Activated T-helper 1 cell treated with anti-CD3 and anti-CD28 coated beads, Interleukin-12 subunit alpha, Interleukin-12 subunit beta, Interleukin-2, Interleukin-4 antibody, amounts not matched to agents 30 ng/mL and 10 ng/mL and 1 ng/mL, durations not matched to agents 14 hours and 24 hours and 36 hours (primary cell): ENCODE measurements at regions of chr14 and their contacts with region 1.

Region 1: GRCh38 chr14:35533357-35534207 is at the start of gene INSM2:
- DNase-seq: peak; percentile 55
- H3K4me3 Mint-ChIP-seq: peak within 1 kb of the TSS; percentile 73
- H3K27ac Mint-ChIP-seq: no peak within 1 kb of the TSS
- H3K4me1 Mint-ChIP-seq: peaks cover 5% of the 10 kb centered on the region
- H3K27me3 Mint-ChIP-seq: peaks cover 55% of the 10 kb centered on the region
- total RNA-seq, gene INSM2: not detected in 2 replicates

Region 2: GRCh38 chr14:35438910-35439713 is 94.5 kb before region 1 on chr14:
- intact Hi-C with region 1: loop called (anchors 5 kb)
- DNase-seq: no peak
- H3K4me3 Mint-ChIP-seq: no peak overlapping the region
- H3K27ac Mint-ChIP-seq: no peak overlapping the region
- H3K4me1 Mint-ChIP-seq: peaks cover 7% of the 10 kb centered on the region
- H3K27me3 Mint-ChIP-seq: no peaks in the 10 kb centered on the region

Region 3: GRCh38 chr14:35492569-35493014 is 41.0 kb before region 1 on chr14:
- intact Hi-C with region 1: no loop called
- DNase-seq: no peak
- H3K4me3 Mint-ChIP-seq: no peak overlapping the region
- H3K27ac Mint-ChIP-seq: no peak overlapping the region
- H3K4me1 Mint-ChIP-seq: no peaks in the 10 kb centered on the region
- H3K27me3 Mint-ChIP-seq: no peaks in the 10 kb centered on the region

Region 4: DNA sequence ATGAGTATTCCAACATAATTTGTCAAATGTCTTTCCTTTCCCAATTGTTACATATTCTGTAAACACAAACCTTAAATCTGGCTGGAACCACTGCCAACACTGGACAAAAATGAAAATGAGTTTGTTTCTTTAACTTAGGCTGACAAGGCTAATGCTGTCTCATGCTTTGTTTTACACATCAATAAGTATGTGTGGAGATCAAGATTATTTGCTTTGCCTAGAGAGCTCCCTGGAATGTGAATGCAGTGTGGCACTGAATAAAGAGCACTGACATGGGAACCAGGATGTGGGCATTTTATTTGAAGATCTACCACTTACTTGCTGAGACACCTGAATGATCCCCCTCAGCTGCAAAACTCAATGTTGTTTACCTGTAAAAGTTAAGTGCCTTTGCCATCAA is 213.8 kb after region 1 on chr14:
- intact Hi-C with region 1: loop called (anchors 10 kb)
- DNase-seq: no peak
- H3K4me3 Mint-ChIP-seq: no peak overlapping the region
- H3K27ac Mint-ChIP-seq: no peak overlapping the region
- H3K4me1 Mint-ChIP-seq: peaks cover 4% of the 10 kb centered on the region
- H3K27me3 Mint-ChIP-seq: no peaks in the 10 kb centered on the region

Region 5: GRCh38 chr14:35808076-35808652 is 274.6 kb after region 1 on chr14:
- intact Hi-C with region 1: loop called (anchors 1 kb)
- DNase-seq: no peak
- H3K4me3 Mint-ChIP-seq: peak overlapping the region; percentile 100
- H3K27ac Mint-ChIP-seq: peak overlapping the region; percentile 97
- H3K4me1 Mint-ChIP-seq: peaks cover 29% of the 10 kb centered on the region
- H3K27me3 Mint-ChIP-seq: peaks cover 3% of the 10 kb centered on the region

Region 6: GRCh38 chr14:35814371-35815005 is 280.9 kb after region 1 on chr14:
- intact Hi-C with region 1: loop called (anchors 1 kb)
- DNase-seq: peak; percentile 67
- H3K4me3 Mint-ChIP-seq: no peak overlapping the region
- H3K27ac Mint-ChIP-seq: no peak overlapping the region
- H3K4me1 Mint-ChIP-seq: peaks cover under 1% of the 10 kb centered on the region
- H3K27me3 Mint-ChIP-seq: no peaks in the 10 kb centered on the region

Region 7: DNA sequence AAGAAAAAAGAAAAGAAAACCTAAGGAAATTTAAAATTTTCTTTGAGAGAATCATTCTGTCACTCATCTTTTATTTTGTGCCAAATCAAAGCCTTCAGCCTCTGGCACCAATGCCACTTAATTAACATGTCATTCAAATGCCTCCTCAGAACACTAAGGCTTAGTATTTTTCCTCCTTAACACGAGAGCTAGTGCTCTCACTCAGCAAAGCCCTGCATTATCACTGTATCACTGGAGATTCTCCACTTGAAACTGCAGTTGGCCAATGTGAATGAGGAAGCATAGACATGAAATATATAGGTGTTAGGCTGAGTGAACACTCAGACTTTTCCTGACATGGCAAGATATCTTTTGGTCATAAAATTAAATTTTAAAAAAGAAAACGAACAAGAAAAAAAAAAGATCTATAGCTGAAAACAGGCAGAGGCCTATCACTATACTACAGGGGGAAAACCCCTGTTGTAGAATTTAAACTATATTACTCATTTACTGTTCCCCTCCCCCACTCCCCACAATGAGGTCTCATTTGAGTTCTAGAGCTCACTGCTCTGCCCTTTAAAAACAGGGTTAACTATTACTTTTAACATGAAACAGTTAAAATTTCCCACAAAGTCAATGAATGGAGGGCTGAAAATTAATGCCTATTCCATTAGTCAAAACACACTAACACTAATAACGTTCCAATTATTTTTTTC is 781.7 kb after region 1 on chr14:
- intact Hi-C with region 1: loop called (anchors 5 kb)
- DNase-seq: no peak
- H3K4me3 Mint-ChIP-seq: no peak overlapping the region
- H3K27ac Mint-ChIP-seq: peak overlapping the region; percentile 57
- H3K4me1 Mint-ChIP-seq: peaks cover 41% of the 10 kb centered on the region
- H3K27me3 Mint-ChIP-seq: no peaks in the 10 kb centered on the region